Endothelial cell of umbilical vein (primary cell): ENCODE measurements at regions of chr1 and their contacts with region 1.

Region 1: DNA sequence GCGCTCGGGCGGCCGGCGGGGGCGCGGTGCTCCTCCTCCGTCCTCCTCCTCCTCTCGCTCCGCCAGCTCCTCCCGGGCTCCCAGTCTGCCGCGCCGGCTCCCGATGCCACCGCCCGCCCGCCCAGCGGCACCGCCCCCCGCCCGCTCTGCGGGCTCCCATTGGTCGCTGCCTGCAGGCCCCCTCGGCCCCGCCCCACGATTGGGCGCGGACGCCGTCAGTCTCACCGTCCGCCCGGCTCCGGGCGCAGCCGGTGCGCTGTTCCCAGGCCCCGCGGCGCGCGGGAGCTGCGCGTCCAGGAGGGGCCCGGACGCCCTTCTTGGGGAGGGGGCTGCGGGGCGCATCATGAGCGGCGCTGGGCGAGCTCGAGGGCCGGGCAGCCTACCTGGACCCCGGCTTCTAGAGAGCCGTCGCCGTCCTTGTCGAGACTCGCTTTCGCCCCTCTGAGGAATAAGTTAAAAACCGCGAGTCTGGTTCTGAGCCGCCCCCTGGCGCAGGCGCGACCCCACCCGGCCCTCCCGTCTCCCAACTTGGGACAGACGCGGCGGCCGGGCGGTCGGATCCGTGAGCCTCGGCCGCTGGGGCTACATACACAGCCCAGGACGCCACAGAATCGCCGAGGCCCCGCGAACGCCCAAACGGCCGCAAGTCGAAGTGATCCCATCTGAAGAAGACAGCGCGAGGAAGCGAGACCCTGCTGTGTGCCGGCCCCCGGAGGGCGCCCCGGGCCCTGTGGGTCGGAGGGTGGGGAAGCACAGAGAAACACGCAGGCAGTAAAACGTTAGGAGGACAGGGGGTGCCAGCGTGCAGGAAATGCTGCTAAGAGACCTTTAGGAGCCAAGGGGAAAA is at the start of gene SIPA1L2:
- DNase-seq: peak; percentile 93
- H3K4me3 ChIP-seq: peak within 1 kb of the TSS; percentile 83 to 88 (median 84)
- H3K27ac ChIP-seq: peak within 1 kb of the TSS; percentile 21
- H3K4me1 ChIP-seq: peaks cover 16% of the 10 kb centered on the region
- H3K27me3 ChIP-seq: no peaks in the 10 kb centered on the region
- CTCF ChIP-seq: peak; percentile 16 to 38
- POLR2A ChIP-seq: no peak
- total RNA-seq, gene SIPA1L2: 12.8 and 14.2 TPM in 2 replicates

Region 2: GRCh38 chr1:231931846-231932454 is 698.3 kb before region 1 on chr1:
- CTCF ChIA-PET with region 1: no interaction called
- POLR2A ChIA-PET with region 1: no interaction called
- dilution Hi-C with region 1: no loop called
- intact Hi-C with region 1: loop called (anchors 2 kb)
- DNase-seq: no peak
- H3K4me3 ChIP-seq: no peak overlapping the region
- H3K27ac ChIP-seq: no peak overlapping the region
- H3K4me1 ChIP-seq: peaks cover 20% of the 10 kb centered on the region
- H3K27me3 ChIP-seq: no peaks in the 10 kb centered on the region
- CTCF ChIP-seq: peak; percentile 42 to 53
- POLR2A ChIP-seq: no peak

Region 3: GRCh38 chr1:232211149-232211548 is 419.1 kb before region 1 on chr1:
- CTCF ChIA-PET with region 1: no interaction called
- POLR2A ChIA-PET with region 1: no interaction called
- dilution Hi-C with region 1: no loop called
- intact Hi-C with region 1: no loop called
- DNase-seq: no peak
- H3K4me3 ChIP-seq: no peak overlapping the region
- H3K27ac ChIP-seq: no peak overlapping the region
- H3K4me1 ChIP-seq: no peaks in the 10 kb centered on the region
- H3K27me3 ChIP-seq: peaks cover 0 to 2% of the 10 kb centered on the region in 2 experiments
- CTCF ChIP-seq: peak; percentile 13 to 31
- POLR2A ChIP-seq: no peak

Region 4: GRCh38 chr1:232250837-232251236 is 379.4 kb before region 1 on chr1:
- CTCF ChIA-PET with region 1: no interaction called
- POLR2A ChIA-PET with region 1: no interaction called
- dilution Hi-C with region 1: no loop called
- intact Hi-C with region 1: loop called (anchors 10 kb)
- DNase-seq: no peak
- H3K4me3 ChIP-seq: no peak overlapping the region
- H3K27ac ChIP-seq: no peak overlapping the region
- H3K4me1 ChIP-seq: no peaks in the 10 kb centered on the region
- H3K27me3 ChIP-seq: no peaks in the 10 kb centered on the region
- CTCF ChIP-seq: no peak
- POLR2A ChIP-seq: no peak

Region 5: DNA sequence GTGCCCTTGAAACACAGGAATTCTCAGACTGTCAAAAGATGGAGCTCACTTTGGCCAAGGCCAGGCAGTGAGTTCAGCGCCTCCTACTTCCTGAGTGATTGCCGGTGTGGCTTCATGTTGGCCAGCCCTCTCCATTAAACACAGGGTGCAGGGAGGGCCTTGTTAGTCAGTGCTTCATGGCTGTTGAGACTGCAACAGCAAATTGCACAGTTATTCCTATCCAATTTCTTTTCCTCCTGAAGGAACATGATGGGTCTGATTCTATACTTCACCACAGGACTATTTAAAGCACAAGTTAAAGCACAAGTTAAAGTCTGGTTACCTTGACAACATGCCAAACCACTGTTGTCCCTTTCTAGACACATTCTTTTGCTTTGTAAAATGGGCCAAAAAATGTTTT is 156.9 kb before region 1 on chr1:
- CTCF ChIA-PET with region 1: interaction called, 5 read pairs
- POLR2A ChIA-PET with region 1: no interaction called
- dilution Hi-C with region 1: no loop called
- intact Hi-C with region 1: loop called (anchors 5 kb)
- DNase-seq: no peak
- H3K4me3 ChIP-seq: no peak overlapping the region
- H3K27ac ChIP-seq: no peak overlapping the region
- H3K4me1 ChIP-seq: peaks cover 17% of the 10 kb centered on the region
- H3K27me3 ChIP-seq: no peaks in the 10 kb centered on the region
- CTCF ChIP-seq: no peak
- POLR2A ChIP-seq: no peak

Region 6: DNA sequence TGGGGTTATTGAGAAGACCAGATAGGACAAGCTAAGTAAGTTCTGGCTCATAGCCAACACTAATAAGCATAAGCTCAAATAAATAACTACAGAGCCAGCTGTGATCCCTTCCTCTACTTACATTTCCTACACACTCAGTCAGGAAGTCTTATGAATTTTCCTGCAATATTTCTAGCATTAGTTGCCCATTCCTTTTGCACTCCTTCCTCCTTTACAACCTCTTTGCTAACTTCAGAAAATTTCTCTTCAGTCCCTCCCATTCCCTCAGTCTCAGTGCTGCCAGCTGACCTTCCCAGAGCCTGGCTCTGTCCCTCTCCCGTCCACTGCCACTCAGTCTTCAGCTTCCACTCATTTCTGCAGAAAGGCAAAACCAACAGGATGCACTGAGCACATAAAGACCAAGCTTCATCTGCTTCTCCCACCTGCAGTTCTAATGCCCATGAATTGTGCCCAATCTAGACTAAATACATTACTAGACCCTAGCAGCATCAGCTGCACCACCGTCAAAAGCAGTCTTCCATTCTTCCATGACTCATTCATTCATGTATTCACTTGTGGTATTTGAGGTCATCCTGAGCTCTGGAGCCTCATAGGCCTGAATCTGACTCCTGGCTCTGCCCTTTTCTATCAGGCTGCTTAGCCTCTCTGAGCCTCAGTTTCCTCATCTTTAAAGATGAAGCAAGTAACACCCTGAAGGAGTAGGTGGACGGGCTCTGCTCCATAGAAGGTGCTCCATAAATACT is 54.3 kb after region 1 on chr1:
- CTCF ChIA-PET with region 1: no interaction called
- POLR2A ChIA-PET with region 1: no interaction called
- dilution Hi-C with region 1: no loop called
- intact Hi-C with region 1: loop called (anchors 2 kb)
- DNase-seq: peak; percentile 74
- H3K4me3 ChIP-seq: no peak overlapping the region
- H3K27ac ChIP-seq: peak overlapping the region; percentile 62
- H3K4me1 ChIP-seq: peaks cover 40% of the 10 kb centered on the region
- H3K27me3 ChIP-seq: no peaks in the 10 kb centered on the region
- CTCF ChIP-seq: no peak
- POLR2A ChIP-seq: peak; percentile 57

Region 7: DNA sequence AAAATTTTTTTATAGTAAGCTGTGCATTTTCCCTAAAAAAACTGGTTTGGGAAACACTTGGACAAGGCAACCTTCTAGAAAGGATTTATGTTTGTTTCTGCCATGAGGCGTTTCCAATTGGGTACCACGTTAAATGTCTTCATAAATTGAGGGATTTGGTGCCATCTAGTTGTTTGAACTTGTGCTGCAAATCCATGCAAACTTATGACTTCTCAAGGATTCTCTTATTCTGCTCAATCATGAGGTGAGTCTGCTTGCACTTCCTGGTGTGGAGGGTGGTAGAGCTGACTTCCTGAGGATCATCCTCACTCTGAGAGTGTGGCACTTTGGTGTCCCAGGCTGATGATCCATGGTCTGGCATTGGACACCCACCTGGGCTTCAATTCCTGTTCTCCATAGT is 542.0 kb after region 1 on chr1:
- CTCF ChIA-PET with region 1: interaction called, 6 read pairs
- POLR2A ChIA-PET with region 1: no interaction called
- dilution Hi-C with region 1: no loop called
- intact Hi-C with region 1: loop called (anchors 1 kb)
- DNase-seq: peak; percentile 67
- H3K4me3 ChIP-seq: no peak overlapping the region
- H3K27ac ChIP-seq: no peak overlapping the region
- H3K4me1 ChIP-seq: no peaks in the 10 kb centered on the region
- H3K27me3 ChIP-seq: no peaks in the 10 kb centered on the region
- CTCF ChIP-seq: peak; percentile 26 to 42
- POLR2A ChIP-seq: no peak